MCF 10A (cell line): ENCODE measurements at regions of chr3 and their contacts with region 1.

Region 1: DNA sequence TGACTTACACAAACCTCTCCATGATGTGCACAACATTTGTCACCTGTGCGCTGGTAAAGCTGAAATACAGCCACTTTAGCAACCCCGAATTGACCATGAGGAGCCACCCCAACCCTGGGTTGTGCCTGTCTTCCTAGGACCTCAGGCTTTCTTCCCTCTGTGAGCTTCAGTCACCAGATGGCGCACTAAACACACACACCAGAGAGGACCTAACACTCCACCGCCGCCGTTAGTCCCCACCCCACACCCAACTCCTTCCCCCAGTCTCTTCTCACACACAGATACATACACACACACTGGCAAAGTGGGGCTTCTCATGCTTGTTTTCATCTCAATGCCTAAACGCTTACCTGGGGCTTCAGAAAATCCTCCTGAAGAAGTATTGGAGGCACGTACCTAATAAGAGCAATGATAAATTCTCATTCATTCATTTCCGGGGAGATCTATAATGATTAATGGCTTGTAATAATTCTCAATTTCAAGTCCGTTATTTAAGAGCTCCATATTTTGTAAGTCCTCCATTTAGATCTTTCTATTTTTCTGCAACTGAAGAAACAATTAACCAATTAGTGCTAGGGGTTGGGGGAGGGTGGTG is 2.1 kb upstream of the CCDC80 start:
- DNase-seq: peak; percentile 94
- H3K4me3 Mint-ChIP-seq: peak overlapping the region; percentile 45
- H3K27ac Mint-ChIP-seq: peak overlapping the region; percentile 75
- H3K4me1 Mint-ChIP-seq: peaks cover 36% of the 10 kb centered on the region
- H3K27me3 Mint-ChIP-seq: no peaks in the 10 kb centered on the region
- CTCF ChIP-seq: peak; percentile 86

Region 2: GRCh38 chr3:112460519-112461195 is 182.4 kb before region 1 on chr3:
- CTCF ChIA-PET with region 1: no interaction called
- POLR2A ChIA-PET with region 1: no interaction called
- intact Hi-C with region 1: no loop called
- DNase-seq: no peak
- H3K4me3 Mint-ChIP-seq: no peak overlapping the region
- H3K27ac Mint-ChIP-seq: no peak overlapping the region
- H3K4me1 Mint-ChIP-seq: no peaks in the 10 kb centered on the region
- H3K27me3 Mint-ChIP-seq: no peaks in the 10 kb centered on the region
- CTCF ChIP-seq: no peak

Region 3: GRCh38 chr3:112653209-112653871 is 10.3 kb after region 1 on chr3:
- CTCF ChIA-PET with region 1: interaction called, 61 read pairs
- POLR2A ChIA-PET with region 1: interaction called, 4 read pairs
- intact Hi-C with region 1: no loop called
- DNase-seq: peak; percentile 67
- H3K4me3 Mint-ChIP-seq: peak overlapping the region; percentile 4
- H3K27ac Mint-ChIP-seq: peak overlapping the region; percentile 40
- H3K4me1 Mint-ChIP-seq: peaks cover 39% of the 10 kb centered on the region
- H3K27me3 Mint-ChIP-seq: no peaks in the 10 kb centered on the region
- CTCF ChIP-seq: no peak

Region 4: DNA sequence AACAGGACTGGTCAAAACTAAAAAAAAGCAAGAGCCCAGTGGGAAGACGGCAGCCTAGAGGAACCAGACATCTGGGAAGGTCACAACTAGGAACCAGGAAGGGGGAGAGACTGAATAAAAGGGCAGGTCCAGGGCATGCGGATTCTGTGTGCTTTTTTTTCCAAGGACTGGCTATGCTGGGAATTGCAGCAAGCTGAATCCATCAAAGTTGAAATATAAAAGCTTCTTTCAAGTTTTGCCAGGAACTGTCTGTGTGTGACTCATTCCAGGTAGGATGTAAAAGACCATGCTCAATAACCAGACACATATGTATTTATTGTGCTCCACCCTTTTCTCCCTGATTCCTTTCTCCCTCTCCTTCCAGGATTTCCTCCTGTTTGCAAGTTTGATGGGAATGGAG is 45.8 kb after region 1 on chr3:
- CTCF ChIA-PET with region 1: interaction called, 21 read pairs
- POLR2A ChIA-PET with region 1: no interaction called
- intact Hi-C with region 1: no loop called
- DNase-seq: peak; percentile 36
- H3K4me3 Mint-ChIP-seq: no peak overlapping the region
- H3K27ac Mint-ChIP-seq: no peak overlapping the region
- H3K4me1 Mint-ChIP-seq: peaks cover 18% of the 10 kb centered on the region
- H3K27me3 Mint-ChIP-seq: no peaks in the 10 kb centered on the region
- CTCF ChIP-seq: no peak

Region 5: GRCh38 chr3:112734718-112735350 is 91.8 kb after region 1 on chr3:
- CTCF ChIA-PET with region 1: interaction called, 59 read pairs
- POLR2A ChIA-PET with region 1: interaction called, 3 read pairs
- intact Hi-C with region 1: loop called (anchors 2 kb)
- DNase-seq: peak; percentile 81
- H3K4me3 Mint-ChIP-seq: no peak overlapping the region
- H3K27ac Mint-ChIP-seq: no peak overlapping the region
- H3K4me1 Mint-ChIP-seq: peaks cover 14% of the 10 kb centered on the region
- H3K27me3 Mint-ChIP-seq: no peaks in the 10 kb centered on the region
- CTCF ChIP-seq: peak; percentile 72

Region 6: GRCh38 chr3:112814266-112814665 is 171.3 kb after region 1 on chr3:
- CTCF ChIA-PET with region 1: interaction called, 193 read pairs
- POLR2A ChIA-PET with region 1: interaction called, 15 read pairs
- intact Hi-C with region 1: loop called (anchors 1 kb)
- DNase-seq: peak; percentile 58
- H3K4me3 Mint-ChIP-seq: no peak overlapping the region
- H3K27ac Mint-ChIP-seq: no peak overlapping the region
- H3K4me1 Mint-ChIP-seq: peaks cover 11% of the 10 kb centered on the region
- H3K27me3 Mint-ChIP-seq: no peaks in the 10 kb centered on the region
- CTCF ChIP-seq: peak; percentile 33

Region 7: DNA sequence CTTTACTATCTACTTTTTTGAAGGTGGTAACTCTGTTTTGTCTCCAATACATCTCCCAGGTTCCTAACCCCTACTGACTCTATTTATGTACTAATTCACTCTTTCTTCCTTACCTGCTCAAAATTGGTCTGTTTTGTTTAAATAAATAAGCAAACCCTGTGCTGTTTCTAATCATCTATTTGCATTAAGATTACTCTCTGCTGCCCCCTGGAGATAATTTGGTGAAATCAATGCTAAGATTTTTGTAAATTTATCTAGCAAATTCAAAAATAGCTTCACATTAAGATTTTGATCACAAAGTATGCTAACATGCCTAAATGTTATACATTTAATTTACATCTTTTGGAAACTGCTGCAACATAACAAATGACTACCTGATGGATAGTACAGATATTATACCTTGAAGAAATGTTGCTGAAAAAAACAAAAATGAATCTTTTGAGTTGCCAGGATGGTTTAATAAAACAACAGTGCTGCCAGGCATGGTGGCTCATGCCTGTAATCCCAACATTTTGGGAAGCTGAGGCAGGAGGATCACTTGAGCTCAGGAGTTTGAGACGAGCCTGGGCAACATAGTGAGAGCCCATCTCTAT is 336.3 kb after region 1 on chr3:
- CTCF ChIA-PET with region 1: interaction called, 103 read pairs
- POLR2A ChIA-PET with region 1: interaction called, 6 read pairs
- intact Hi-C with region 1: loop called (anchors 1 kb)
- DNase-seq: peak; percentile 56
- H3K4me3 Mint-ChIP-seq: no peak overlapping the region
- H3K27ac Mint-ChIP-seq: no peak overlapping the region
- H3K4me1 Mint-ChIP-seq: no peaks in the 10 kb centered on the region
- H3K27me3 Mint-ChIP-seq: peaks cover 20% of the 10 kb centered on the region
- CTCF ChIP-seq: peak; percentile 41